Right ventricle myocardium inferior (tissue), 1 donor: ENCODE measurements at regions of chr11 and their contacts with region 1.

Region 1: DNA sequence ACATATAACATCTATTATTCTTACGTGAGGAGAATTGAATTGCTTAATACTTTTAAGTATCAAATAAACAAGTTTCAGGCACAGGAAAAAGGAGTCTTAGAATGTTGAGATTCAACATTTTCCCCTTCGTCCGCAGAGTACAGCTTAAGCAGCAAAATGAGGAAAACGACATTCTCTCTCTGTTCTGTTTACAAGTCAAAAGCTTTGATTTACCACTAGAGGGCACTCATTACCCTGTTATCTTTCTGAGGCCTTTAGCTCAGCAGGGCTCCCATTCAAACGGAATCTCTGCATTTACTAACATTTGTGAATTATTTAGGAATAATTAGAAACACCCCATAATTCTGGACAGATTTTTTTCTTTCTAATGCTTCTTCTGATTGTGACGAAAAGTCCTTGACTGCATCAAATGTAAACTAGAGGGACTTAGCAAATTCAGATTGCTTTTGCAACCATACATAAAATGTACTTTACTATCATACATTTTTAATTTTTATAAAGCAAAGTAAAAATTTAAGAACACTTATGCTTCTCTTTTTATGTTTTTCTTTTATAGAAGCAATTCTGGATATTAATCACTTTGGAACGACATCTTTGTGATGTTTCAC is 75.0 kb downstream of the JRKL start:
- DNase-seq: no peak
- ATAC-seq: peak; percentile 90

Region 2: GRCh38 chr11:96279018-96279895 is 185.5 kb before region 1 on chr11:
- intact Hi-C with region 1: no loop called
- DNase-seq: no peak
- ATAC-seq: no peak

Region 3: GRCh38 chr11:96424693-96425092 is 40.1 kb before region 1 on chr11:
- intact Hi-C with region 1: no loop called
- DNase-seq: no peak
- ATAC-seq: no peak

Region 4: GRCh38 chr11:96622026-96622634 is 157.3 kb after region 1 on chr11:
- intact Hi-C with region 1: loop called (anchors 5 kb)
- DNase-seq: no peak
- ATAC-seq: peak; percentile 87

Region 5: DNA sequence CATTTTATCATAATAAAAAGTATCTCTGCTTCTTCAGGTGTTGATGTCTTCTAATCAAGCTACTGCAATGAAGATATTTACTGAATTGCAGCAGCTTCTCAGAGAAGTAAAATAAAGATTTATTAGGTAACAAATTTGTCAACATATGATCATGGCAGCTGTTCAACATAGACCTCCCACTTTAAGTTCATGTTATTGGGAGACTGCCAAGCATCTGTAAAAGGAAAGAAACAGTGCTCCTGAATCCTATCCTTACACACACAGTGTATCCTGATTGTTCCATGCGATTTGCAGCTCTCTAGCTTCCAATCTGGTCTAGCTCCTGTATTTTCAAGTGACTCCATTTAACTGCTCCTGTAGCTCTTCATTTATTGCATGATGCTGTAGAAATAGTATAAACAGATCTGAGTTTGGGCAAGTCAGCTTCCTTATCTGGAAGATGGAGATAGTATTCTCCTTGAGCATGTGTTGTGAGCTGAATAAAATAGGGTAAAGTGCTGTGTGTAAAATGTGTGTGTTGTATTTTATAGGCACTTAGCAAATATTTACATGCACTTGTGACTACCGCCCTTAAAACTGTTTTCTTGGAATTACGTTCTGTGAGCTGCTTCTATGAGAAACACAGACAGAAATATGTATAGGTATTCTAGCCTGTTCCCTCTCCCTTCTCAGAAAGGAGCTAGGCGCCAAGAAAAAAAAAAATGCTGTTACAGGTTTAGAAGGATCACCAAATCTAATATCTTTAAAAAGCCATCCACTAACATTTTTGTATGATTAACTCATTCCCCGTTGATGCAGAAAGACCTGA is 215.6 kb after region 1 on chr11:
- intact Hi-C with region 1: no loop called
- DNase-seq: no peak
- ATAC-seq: no peak

Region 6: GRCh38 chr11:96827164-96827563 is 362.4 kb after region 1 on chr11:
- intact Hi-C with region 1: loop called (anchors 2 kb)
- DNase-seq: no peak
- ATAC-seq: peak; percentile 28

Region 7: DNA sequence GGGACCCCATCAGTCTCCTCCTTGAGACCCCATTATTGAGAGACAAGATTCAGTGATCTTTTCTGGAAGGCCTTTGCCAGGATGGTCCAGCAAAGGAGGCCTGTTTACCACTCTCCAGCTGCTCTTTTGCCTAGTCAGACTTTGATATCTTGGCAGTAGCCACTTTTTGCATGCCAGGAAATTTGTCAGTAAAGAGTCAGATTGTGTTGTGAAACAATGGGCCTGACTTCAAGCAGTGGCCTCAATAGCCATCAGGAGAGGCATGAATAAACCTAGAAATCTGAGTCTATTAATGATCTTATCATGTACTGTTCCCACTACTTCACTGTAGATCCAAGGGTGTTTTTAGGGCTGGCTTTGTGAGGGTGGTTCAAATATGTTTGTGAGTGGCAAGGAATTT is 404.4 kb after region 1 on chr11:
- intact Hi-C with region 1: loop called (anchors 10 kb)
- DNase-seq: no peak
- ATAC-seq: peak; percentile 72

Region 8: DNA sequence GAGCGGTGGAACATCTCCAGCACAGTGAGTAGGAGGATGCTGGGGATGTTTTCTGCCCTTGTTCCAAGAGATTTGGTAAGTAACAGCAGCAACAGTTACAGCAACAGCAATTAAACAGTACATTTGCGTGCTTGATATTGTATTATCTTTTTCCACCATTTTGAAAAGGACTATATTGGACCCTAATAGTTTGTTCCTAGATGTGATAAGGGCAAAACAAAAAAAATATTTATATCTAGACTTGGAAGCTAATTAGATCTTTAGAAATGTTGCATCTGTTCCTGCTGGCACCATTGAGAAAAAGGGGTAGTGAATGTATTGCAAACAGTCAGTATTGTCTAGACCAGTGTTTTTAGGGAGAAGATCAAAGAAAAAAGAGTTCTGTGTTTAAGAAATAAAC is 684.9 kb after region 1 on chr11:
- intact Hi-C with region 1: loop called (anchors 5 kb)
- DNase-seq: no peak
- ATAC-seq: no peak

Region 9: DNA sequence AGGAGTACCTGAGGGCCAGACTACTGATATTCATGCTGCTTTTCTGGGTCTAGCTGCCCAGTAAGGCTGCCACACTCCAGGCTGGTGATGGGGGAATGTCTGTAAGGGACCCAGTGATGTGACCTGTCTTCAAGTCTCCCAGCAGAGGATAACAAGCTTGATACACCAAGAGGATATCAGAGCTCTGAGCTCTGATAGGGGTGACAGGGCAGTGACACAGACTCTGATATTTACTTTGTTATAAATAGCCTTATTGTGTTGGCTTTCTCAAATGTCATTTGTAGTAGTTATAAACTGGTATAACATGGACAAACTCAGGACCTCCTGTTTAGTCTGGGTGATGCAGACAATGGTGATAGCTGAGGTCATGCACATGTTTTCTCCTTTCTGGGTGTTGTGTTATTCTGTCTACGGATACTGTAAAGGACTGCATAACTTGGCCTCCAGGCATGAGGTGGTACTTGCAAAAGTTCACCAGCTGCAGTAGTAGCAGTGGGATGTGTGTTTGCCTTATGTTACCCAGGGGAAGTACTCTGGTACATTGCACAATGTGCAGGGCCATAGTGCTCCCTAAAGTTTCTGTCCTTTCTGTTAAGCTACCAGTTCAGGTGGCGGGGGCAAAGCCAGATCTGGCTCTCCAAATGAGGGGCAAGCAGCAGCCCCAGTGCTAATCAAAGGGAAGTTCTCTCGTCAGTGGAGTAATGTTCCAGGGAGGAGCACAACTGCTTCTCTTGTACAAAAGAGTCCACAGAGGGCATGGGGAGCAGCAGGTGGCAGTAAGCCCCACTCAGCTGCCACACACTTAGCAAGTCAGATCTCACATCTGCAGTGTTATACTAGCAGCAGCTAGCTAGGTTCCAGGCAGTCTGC is 737.2 kb after region 1 on chr11:
- intact Hi-C with region 1: loop called (anchors 10 kb)
- DNase-seq: peak; percentile 37
- ATAC-seq: peak; percentile 83

Region 10: DNA sequence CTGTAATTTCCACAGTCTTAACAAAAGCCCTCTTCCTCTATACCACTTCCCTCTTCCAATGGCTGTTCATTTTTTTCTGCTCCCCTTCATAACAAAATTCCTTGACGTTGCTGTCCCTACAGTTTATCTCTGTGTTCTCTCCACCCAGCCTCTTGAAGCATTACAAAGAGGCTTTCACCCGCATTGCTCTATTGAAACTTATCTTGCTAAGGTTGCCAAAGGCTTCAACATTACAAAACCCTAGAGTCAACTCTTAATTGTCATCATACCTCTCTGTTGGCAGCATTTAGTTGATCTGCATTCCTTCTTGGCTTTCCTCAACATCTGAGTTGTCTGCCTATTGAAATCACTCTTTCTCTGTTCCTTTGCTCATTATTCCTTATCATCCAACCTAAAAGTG is 980.8 kb after region 1 on chr11:
- intact Hi-C with region 1: loop called (anchors 10 kb)
- DNase-seq: no peak
- ATAC-seq: peak; percentile 84